ENCODE measurements at regions of chr12 and their contacts with region 1.

Region 1: GRCh38 chr12:83005534-83006197 is 319.0 kb downstream of the TMTC2 start:
- H3K4me3 Mint-ChIP-seq: no peak overlapping the region
- H3K27ac Mint-ChIP-seq: no peak overlapping the region
- H3K4me1 Mint-ChIP-seq: peaks cover 11% of the 10 kb centered on the region
- H3K27me3 Mint-ChIP-seq: no peaks in the 10 kb centered on the region

Region 2: GRCh38 chr12:83042441-83043200 is 37.0 kb after region 1 on chr12:
- intact Hi-C with region 1: no loop called
- H3K4me3 Mint-ChIP-seq: no peak overlapping the region
- H3K27ac Mint-ChIP-seq: no peak overlapping the region
- H3K4me1 Mint-ChIP-seq: peaks cover 6% of the 10 kb centered on the region
- H3K27me3 Mint-ChIP-seq: no peaks in the 10 kb centered on the region

Region 3: DNA sequence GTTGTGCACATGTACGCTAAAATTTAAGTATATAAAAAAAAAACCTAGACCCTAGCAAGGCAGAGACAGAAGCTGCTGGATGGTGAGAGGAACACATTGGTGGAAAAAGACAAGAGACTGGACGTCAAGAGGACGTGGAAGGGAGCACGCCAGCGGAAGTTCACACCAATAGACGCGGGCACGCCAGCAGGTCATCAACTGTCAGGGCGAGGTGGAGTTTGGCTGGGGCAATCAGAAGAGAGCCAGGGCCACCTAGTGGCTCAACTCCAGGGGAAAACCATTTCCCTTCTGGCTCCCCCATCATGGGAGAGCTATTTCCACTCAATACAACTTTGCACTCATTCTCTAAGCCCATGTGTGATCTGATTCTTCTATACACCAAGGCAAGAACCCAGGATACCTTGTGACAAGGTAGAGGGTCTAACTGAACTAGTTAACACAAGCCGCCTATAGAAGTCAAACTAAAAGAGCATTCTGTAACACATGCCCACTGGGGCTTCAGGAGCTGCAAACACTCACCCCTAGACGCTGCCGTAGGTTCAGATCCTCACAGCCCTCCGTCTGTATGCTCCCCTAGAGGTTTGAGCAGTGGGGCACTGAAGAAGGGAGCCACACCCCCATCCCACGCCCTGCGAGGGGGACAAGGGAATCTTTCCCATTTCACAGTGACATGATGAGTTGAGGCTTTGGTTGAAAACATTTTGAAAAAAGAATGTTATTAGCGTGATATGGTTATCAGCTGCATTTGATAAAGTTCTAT is 383.8 kb after region 1 on chr12:
- intact Hi-C with region 1: loop called (anchors 10 kb)
- H3K4me3 Mint-ChIP-seq: no peak overlapping the region
- H3K27ac Mint-ChIP-seq: no peak overlapping the region
- H3K4me1 Mint-ChIP-seq: no peaks in the 10 kb centered on the region
- H3K27me3 Mint-ChIP-seq: no peaks in the 10 kb centered on the region

Measured in dendritic cell treated with granulocyte-macrophage colony-stimulating factor and Interleukin-4, amounts not matched to agents 40 ng/mL and 50 ng/mL, for 4 days (primary cell).